ENCODE measurements at regions of chr19 and their contacts with region 1.

Region 1: GRCh38 chr19:47436712-47437401 is 17.5 kb upstream of the MEIS3 start:
- DNase-seq: no peak
- ATAC-seq: peak; percentile 96
- H3K4me3 ChIP-seq: no peak overlapping the region
- H3K27ac ChIP-seq: no peak overlapping the region
- H3K4me1 ChIP-seq: no peaks in the 10 kb centered on the region; the same call in none of the 2 replicates
- H3K27me3 ChIP-seq: no peaks in the 10 kb centered on the region; a peak in 2 of 4 replicates
- CTCF ChIP-seq: peak; percentile 77 to 88 (median 85)
- EP300 ChIP-seq: no peak
- POLR2A ChIP-seq: no peak
- RAD21 ChIP-seq: peak; percentile 95

Region 2: DNA sequence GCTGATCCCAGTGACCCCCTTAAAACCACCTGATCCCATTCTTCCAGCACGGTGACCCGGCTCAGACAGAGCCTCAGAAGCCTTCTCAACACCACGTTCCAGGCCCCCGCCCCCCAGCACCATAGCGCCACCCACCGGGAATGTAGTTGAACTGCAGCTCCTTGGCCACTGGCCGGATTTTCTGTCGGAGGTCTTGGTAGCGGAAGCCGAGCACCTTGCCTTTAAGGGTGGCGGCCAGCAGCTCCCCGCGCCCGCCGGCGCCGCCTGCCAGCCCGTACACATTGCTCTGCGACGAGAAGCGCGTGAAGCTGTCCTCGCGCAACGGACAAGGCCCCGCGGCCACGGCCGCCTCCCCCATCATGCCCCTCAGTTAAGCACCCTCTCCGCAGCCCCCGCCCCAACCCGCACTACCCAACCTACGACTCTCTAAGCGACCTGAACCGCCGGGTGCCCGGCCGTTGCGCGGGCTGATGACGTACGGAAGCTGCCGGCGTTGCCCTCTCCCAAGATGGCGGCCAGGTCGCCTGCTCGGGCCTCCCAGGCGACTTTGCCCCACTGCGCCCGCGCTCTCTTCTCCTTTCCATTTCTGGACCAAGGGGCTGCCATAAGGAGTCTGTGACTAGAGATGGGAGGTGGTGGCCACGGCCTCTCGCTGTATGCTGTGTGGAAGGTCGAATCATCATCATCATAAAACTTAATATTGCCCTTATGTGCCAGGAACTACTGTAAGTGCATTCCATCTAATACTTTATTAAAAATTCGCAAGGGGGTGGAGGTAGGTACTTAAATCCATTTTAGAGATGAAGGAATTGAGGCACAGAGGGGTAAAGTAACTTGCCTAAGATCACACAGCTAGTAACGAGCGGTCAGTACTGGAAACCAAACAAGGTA is 47.2 kb after region 1 on chr19 and contains the start of gene KPTN:
- CTCF ChIA-PET with region 1: interaction called, 34 read pairs
- POLR2A ChIA-PET with region 1: no interaction called
- RAD21 ChIA-PET with region 1: interaction called, 14 read pairs
- SMC1A ChIA-PET with region 1: interaction called, 5 read pairs
- in situ Hi-C with region 1: no loop called
- intact Hi-C with region 1: loop called (anchors 2 kb)
- DNase-seq: peak; percentile 57
- ATAC-seq: peak; percentile 88
- H3K4me3 ChIP-seq: peak within 1 kb of the TSS; percentile 96
- H3K27ac ChIP-seq: peak within 1 kb of the TSS; percentile 89
- H3K4me1 ChIP-seq: peaks cover 35% of the 10 kb centered on the region
- H3K27me3 ChIP-seq: no peaks in the 10 kb centered on the region
- CTCF ChIP-seq: peak; percentile 87 to 99 (median 97)
- EP300 ChIP-seq: no peak
- POLR2A ChIP-seq: peak; percentile 91
- RAD21 ChIP-seq: peak; percentile 66
- polyA plus RNA-seq, gene KPTN: 0.60 to 2.1 TPM